ENCODE measurements at regions of chr17 and their contacts with region 1.

Region 1: GRCh38 chr17:4908301-4908700 is 5.4 kb upstream of the CHRNE start:
- DNase-seq: no peak
- H3K4me3 ChIP-seq: no peak overlapping the region
- H3K27ac ChIP-seq: peak overlapping the region in 2 of 4 donors; percentile 4 to 53
- H3K4me1 ChIP-seq: peaks cover 3 to 12% (median 7%) of the 10 kb centered on the region in 4 donors
- H3K27me3 ChIP-seq: no peaks in the 10 kb centered on the region
- CTCF ChIP-seq: no peak
- EP300 ChIP-seq: no peak
- POLR2A ChIP-seq: no peak

Region 2: DNA sequence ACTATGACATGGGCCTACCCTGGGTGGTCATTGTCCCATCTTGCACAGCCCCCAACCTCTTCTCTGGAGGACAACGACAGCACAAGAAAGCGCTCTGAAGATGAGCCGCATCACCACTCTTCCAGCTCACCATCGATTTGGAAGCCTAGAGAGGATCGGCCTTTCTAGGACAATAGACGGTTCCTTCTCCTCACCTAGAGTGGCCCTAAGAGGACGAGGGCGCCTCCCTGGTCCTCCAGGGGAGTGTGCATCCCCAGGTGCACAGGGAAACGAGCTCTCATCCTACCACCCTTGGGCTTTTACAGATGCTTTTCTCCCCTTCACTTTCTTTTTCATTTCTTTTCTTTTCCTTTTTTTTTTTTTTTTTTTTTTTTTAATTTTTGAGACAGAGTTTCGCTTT is 147.2 kb after region 1 on chr17:
- in situ Hi-C with region 1: loop called in 3 of 4 experiments (anchors 10 to 25 kb)
- intact Hi-C with region 1: loop called (anchors 5 kb)
- DNase-seq: no peak
- H3K4me3 ChIP-seq: no peak overlapping the region
- H3K27ac ChIP-seq: no peak overlapping the region
- H3K4me1 ChIP-seq: no peaks in the 10 kb centered on the region
- H3K27me3 ChIP-seq: no peaks in the 10 kb centered on the region
- CTCF ChIP-seq: no peak
- EP300 ChIP-seq: no peak
- POLR2A ChIP-seq: no peak

Measured in transverse colon (tissue), 4 donors.